Heart left ventricle (tissue), 16 donors: ENCODE measurements at regions of chr22 and their contacts with region 1.

Region 1: DNA sequence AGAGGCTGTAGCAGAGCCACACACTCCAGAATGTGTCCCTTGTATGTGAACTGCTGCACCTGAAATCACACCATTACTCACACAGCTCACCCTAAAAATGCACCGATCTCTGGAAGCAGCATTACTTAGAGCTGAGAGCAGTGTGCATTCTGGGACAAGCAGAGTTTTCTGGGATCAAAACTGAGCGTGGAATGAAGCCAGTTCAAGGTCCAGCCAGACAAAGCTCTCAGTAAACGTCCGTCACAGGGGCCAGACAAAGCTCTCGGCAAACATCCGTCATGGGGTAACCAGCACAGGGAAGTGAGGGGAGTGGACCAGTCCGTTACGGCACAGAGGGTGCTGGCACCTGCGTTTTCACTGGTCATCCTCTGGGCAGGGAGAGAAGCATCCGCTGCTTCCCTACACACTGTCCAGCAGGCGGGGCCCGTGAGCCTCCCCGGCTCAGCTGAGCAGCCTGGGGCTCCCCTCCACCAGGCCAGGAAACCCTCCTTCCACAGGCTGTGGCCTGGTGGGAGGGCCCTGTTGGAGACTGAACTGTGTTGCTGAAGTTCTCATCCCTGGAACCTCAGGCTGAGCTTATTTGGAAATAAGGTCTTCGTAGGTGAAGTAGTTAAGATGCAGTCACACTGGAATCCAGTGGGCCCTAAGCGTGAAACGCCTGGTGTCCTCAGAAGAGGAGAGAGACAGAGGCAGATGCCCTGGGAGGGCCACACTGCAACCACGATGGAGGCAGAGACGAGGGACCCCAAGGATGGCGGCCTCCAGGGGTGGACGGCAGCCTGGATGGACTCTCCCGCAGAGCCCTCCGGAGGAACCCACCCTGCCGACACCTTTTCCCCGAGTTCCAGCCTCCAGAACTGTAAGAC is 883.9 kb downstream of the BRD1 start:
- DNase-seq: no peak
- ATAC-seq: peak; percentile 33 to 58 (median 50)
- H3K4me3 ChIP-seq: no peak overlapping the region
- H3K27ac ChIP-seq: no peak overlapping the region
- H3K4me1 ChIP-seq: no peaks in the 10 kb centered on the region
- H3K27me3 ChIP-seq: peaks cover 0 to 10% (median 0%) of the 10 kb centered on the region in 9 donors
- CTCF ChIP-seq: peak in 10 of 12 donors; percentile 24 to 54 (median 38)
- POLR2A ChIP-seq: no peak

Region 2: GRCh38 chr22:48849963-48850657 is 93.7 kb before region 1 on chr22:
- intact Hi-C with region 1: no loop called
- DNase-seq: peak in 1 of 5 donors; percentile 2
- ATAC-seq: no peak
- H3K4me3 ChIP-seq: no peak overlapping the region
- H3K27ac ChIP-seq: no peak overlapping the region
- H3K4me1 ChIP-seq: no peaks in the 10 kb centered on the region
- H3K27me3 ChIP-seq: peaks cover 0 to 10% (median 0%) of the 10 kb centered on the region in 9 donors
- CTCF ChIP-seq: no peak
- POLR2A ChIP-seq: no peak

Region 3: DNA sequence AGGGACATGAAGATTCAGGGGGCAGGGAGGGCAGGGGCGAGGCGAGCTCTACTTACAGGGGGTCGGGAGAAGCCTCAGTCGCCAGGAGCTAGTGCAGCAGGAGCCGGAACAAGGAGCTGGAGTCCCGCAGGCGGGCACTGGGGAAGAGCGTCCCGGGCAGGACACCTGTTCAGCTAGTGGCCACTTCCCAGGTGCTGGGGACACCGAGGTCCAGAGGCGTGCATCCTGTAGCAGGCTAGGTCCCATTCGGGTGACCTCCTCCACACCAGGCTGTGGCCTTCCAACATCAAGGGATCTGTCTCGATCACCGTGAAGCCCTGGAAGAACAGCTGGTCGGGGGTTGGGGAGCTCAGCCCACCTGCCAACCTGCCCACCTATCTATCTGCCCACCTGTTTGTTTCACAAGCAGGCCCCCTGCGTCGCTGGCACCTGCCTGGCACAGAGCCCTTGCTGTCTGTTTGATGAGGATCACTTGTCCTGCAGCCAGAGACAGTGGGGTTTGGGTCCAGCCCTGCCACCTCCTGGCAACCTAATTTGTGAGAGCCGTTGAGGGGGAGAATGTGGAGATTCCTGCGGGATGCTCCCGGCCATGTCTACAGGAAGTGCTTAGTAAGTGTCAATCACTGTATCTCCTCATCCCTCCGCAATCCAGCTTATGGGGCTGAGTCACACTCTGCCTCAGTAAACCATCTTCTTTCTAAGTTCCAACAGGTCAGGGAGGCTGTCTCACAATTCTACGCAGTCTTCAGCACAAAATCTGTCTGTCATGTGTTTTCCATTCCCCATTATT is 57.0 kb before region 1 on chr22:
- intact Hi-C with region 1: loop called in 1 of 10 experiments (anchors 10 kb)
- DNase-seq: peak in 1 of 5 donors; percentile 22
- ATAC-seq: no peak
- H3K4me3 ChIP-seq: no peak overlapping the region
- H3K27ac ChIP-seq: no peak overlapping the region
- H3K4me1 ChIP-seq: no peaks in the 10 kb centered on the region
- H3K27me3 ChIP-seq: peaks cover 0 to 20% (median 0%) of the 10 kb centered on the region in 9 donors
- CTCF ChIP-seq: no peak
- POLR2A ChIP-seq: no peak

Region 4: GRCh38 chr22:49026494-49027380 is 82.9 kb after region 1 on chr22:
- intact Hi-C with region 1: loop called in 1 of 10 experiments (anchors 10 kb)
- DNase-seq: peak in 1 of 5 donors; percentile 21
- ATAC-seq: no peak
- H3K4me3 ChIP-seq: no peak overlapping the region
- H3K27ac ChIP-seq: no peak overlapping the region
- H3K4me1 ChIP-seq: no peaks in the 10 kb centered on the region
- H3K27me3 ChIP-seq: peaks cover 0 to 37% (median 0%) of the 10 kb centered on the region in 9 donors
- CTCF ChIP-seq: peak in 3 of 12 donors; percentile 12 to 36 (median 20)
- POLR2A ChIP-seq: no peak

Region 5: GRCh38 chr22:49119551-49119952 is 175.8 kb after region 1 on chr22:
- intact Hi-C with region 1: no loop called
- DNase-seq: no peak
- ATAC-seq: peak in 3 of 4 donors; percentile 45 to 65 (median 65)
- H3K4me3 ChIP-seq: no peak overlapping the region
- H3K27ac ChIP-seq: no peak overlapping the region
- H3K4me1 ChIP-seq: peaks cover 0 to 5% (median 0%) of the 10 kb centered on the region in 12 donors
- H3K27me3 ChIP-seq: peaks cover 0 to 12% (median 0%) of the 10 kb centered on the region in 9 donors
- CTCF ChIP-seq: no peak
- POLR2A ChIP-seq: no peak